Activated CD4-positive, alpha-beta memory T cell treated with anti-CD3 and anti-CD28 coated beads, Interleukin-2, amount 10 ng/mL, durations not matched to agents 7 days and 5 days (primary cell): ENCODE measurements at regions of chr17 and their contacts with region 1.

Region 1: GRCh38 chr17:4715063-4715744 is 4.8 kb downstream of the ARRB2 start:
- DNase-seq: peak; percentile 76
- H3K4me3 Mint-ChIP-seq: peak overlapping the region; percentile 83
- H3K27ac Mint-ChIP-seq: peak overlapping the region; percentile 86
- H3K4me1 Mint-ChIP-seq: peaks cover 67% of the 10 kb centered on the region
- H3K27me3 Mint-ChIP-seq: no peaks in the 10 kb centered on the region

Region 2: GRCh38 chr17:4703330-4703691 is 11.9 kb before region 1 on chr17:
- CTCF ChIA-PET with region 1: interaction called, 8 read pairs
- POLR2A ChIA-PET with region 1: interaction called, 12 read pairs
- DNase-seq: no peak
- H3K4me3 Mint-ChIP-seq: peak overlapping the region; percentile 75
- H3K27ac Mint-ChIP-seq: peak overlapping the region; percentile 87
- H3K4me1 Mint-ChIP-seq: peaks cover 61% of the 10 kb centered on the region
- H3K27me3 Mint-ChIP-seq: no peaks in the 10 kb centered on the region

Region 3: GRCh38 chr17:4858882-4859260 is 143.7 kb after region 1 on chr17:
- CTCF ChIA-PET with region 1: no interaction called
- POLR2A ChIA-PET with region 1: no interaction called
- DNase-seq: no peak
- H3K4me3 Mint-ChIP-seq: no peak overlapping the region
- H3K27ac Mint-ChIP-seq: no peak overlapping the region
- H3K4me1 Mint-ChIP-seq: peaks cover 8% of the 10 kb centered on the region
- H3K27me3 Mint-ChIP-seq: no peaks in the 10 kb centered on the region

Region 4: GRCh38 chr17:4948931-4949320 is 233.7 kb after region 1 on chr17:
- CTCF ChIA-PET with region 1: no interaction called
- POLR2A ChIA-PET with region 1: interaction called, 15 read pairs
- DNase-seq: peak; percentile 83
- H3K4me3 Mint-ChIP-seq: peak overlapping the region; percentile 96
- H3K27ac Mint-ChIP-seq: peak overlapping the region; percentile 100
- H3K4me1 Mint-ChIP-seq: peaks cover 44% of the 10 kb centered on the region
- H3K27me3 Mint-ChIP-seq: no peaks in the 10 kb centered on the region